ENCODE measurements at regions of chr13 and their contacts with region 1.

Region 1: GRCh38 chr13:114248011-114248410 is 13.3 kb downstream of the CDC16 start:
- DNase-seq: no peak
- H3K4me3 ChIP-seq: no peak overlapping the region
- H3K27ac ChIP-seq: no peak overlapping the region
- H3K4me1 ChIP-seq: no peaks in the 10 kb centered on the region
- H3K27me3 ChIP-seq: no peaks in the 10 kb centered on the region
- CTCF ChIP-seq: no peak
- EP300 ChIP-seq: no peak
- POLR2A ChIP-seq: no peak
- RAD21 ChIP-seq: no peak

Region 2: DNA sequence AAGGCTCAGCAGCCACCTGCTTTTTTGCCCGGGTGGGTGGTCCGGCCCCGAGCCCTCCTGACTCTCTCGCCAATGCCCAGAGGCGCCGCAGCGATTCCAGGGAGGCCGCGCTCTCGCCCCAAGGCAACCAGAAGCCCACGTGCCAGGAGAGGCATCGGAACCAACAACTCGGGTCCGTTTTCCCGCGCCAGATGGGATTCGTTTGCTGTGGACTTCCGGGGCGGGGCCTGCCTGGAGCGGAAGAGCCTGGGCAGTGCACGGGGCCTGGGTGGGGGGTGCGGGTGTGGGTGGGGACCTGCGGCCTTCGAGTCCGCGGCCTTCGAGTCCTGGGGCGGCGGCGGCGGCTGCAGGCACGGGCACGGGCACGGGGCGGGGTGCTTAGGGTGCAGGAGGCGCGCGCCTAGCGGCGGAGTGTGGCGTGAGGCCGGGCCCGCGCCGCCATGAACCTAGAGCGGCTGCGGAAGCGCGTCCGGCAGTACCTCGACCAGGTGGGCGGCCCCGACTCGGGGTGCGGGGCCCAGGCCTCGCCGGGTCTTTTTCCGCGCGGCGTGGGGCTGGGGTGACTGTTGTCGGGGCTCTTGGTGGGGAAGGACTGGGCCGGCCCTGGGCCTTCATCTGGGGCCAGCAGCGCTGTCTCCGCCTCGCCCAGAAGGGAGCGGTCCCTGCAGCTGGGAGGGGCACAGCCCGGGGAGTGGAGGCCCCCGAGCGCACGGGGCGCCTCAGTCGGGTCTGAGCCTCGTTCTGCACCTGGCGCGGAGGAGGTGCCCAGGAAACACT is 13.2 kb before region 1 on chr13 and contains the start of gene CDC16:
- CTCF ChIA-PET with region 1: interaction called, 4 read pairs
- POLR2A ChIA-PET with region 1: interaction called, 33 read pairs
- DNase-seq: peak; percentile 80 to 89
- H3K4me3 ChIP-seq: peak within 1 kb of the TSS; percentile 76 to 88 (median 80)
- H3K27ac ChIP-seq: 0 out of 2 replicates have a peak within 1 kb of the TSS, but pooled peaks have one; percentile 11
- H3K4me1 ChIP-seq: peaks cover 8 to 14% (median 9%) of the 10 kb centered on the region in 4 experiments; a peak in 5 of 7 replicates
- H3K27me3 ChIP-seq: no peaks in the 10 kb centered on the region
- CTCF ChIP-seq: peak in 1 of 3 experiments; percentile 2; a peak in 1 of 4 replicates
- EP300 ChIP-seq: peak in 1 of 2 experiments; percentile 48; a peak in 1 of 3 replicates
- POLR2A ChIP-seq: peak; percentile 30 to 60; a peak in 1 of 3 replicates
- RAD21 ChIP-seq: no peak; a peak in 1 of 4 replicates
- total RNA-seq, gene CDC16: 78.7 and 83.4 TPM in 2 replicates